Kidney (tissue), 22 donors: ENCODE measurements at regions of chr7 and their contacts with region 1.

Region 1: DNA sequence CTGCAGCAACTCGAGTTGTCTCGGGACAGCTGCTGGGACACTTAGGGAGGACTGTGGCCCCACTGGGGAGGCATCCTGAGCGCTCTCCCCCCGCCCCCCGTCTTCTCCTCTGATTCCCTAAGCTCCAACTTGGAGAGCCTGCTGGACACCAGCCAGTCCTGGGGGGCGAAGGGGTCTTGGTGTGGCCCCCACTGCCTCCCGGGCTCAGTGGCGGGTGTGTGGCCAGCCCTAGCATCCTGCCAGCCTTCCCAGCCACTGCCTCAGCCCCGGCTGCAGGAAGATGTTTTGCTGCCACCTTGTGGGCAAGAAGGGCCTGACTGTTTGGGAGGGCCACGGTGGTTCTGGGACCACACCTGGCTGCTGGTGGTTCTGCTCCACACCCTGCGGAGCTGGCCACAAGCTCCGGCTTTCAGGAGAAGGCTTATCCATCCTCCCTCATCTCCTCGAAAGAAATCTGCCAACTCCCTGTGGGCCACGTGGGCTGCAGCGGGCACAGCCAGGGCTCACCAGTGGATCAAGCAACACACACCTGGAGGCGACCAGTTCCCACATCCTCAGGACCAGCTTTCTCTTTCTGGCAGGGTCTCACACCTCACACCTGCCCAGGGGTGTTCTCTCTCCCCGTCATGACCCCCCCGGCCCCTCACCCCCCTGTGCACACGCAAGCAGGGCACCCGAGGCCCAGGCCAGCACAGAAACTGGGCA is 24.8 kb downstream of the AGAP3 start:
- DNase-seq: peak; percentile 78 to 89 (median 83)
- H3K4me3 ChIP-seq: no peak overlapping the region
- H3K27ac ChIP-seq: no peak overlapping the region
- H3K4me1 ChIP-seq: no peaks in the 10 kb centered on the region
- H3K27me3 ChIP-seq: no peaks in the 10 kb centered on the region
- CTCF ChIP-seq: peak; percentile 97

Region 2: DNA sequence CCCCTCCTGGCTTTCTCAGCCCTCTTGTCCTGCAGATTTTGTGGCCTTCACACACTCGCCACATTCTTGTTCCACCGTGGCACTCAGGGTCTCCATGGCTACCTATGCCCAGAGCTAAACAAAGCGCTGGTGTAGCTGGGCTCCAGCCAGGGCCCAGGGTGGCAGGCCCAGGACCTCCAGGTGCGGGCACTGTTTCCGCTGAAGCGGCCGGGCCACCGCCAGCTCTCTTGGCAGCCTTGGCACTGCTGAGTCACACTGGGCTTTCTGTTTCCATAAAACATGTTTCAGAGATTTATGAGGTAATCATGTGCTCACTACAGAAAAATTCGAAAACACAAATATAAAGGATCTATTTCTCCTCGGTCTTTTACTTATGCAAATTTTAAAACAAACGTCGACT is 207.5 kb before region 1 on chr7:
- intact Hi-C with region 1: loop called (anchors 10 kb)
- DNase-seq: peak in 2 of 5 donors; percentile 42 to 89
- H3K4me3 ChIP-seq: no peak overlapping the region
- H3K27ac ChIP-seq: no peak overlapping the region
- H3K4me1 ChIP-seq: peaks cover 0 to 8% (median 0%) of the 10 kb centered on the region in 3 donors
- H3K27me3 ChIP-seq: no peaks in the 10 kb centered on the region
- CTCF ChIP-seq: no peak

Region 3: DNA sequence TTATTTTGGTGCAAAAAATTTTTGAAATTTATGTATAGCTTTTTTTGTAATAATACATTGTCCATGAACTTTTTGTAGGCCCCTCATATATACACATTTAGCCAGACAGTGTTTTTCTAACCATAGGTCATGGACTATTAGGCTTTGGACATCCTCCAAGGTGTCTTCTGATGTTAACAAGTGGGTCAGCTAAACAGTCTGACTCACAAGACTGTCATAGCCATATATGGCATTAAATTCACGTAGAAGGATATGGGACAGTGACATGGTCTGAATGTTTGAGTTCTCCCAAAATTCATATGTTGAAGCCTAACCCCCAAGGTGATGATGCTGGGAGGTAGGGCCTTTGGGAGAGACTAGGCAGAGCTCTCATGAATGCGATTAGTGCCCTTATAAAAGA is 216.6 kb after region 1 on chr7:
- intact Hi-C with region 1: no loop called
- DNase-seq: no peak
- H3K4me3 ChIP-seq: no peak overlapping the region
- H3K27ac ChIP-seq: no peak overlapping the region
- H3K4me1 ChIP-seq: no peaks in the 10 kb centered on the region
- H3K27me3 ChIP-seq: no peaks in the 10 kb centered on the region
- CTCF ChIP-seq: no peak